Tibial artery (tissue), 4 donors: ENCODE measurements at regions of chr9 and their contacts with region 1.

Region 1: DNA sequence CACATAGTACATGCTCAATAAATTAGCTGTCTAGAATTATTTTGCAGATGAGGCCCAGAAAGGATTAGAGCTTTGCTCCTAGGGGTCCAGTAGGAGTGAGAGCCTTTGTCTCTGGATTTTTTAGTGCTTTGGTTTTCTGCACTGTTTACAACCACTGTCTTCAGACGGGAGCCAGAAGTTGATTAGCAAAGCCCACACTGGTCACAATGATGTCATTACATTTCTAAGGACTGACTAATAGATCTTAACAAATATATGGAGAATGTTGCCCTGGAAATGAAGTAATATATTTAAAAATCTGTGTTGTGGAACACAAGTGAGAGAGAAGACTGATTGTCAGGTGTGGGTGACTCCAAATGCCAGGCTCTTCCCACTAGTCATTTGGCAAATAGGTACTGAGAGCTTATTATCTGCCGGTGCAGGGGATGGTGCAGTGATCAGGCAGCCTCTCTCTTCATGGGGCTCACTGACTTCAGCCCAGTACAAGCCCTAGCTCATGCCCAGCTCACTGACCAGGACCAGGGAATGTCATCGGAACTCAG is 76.2 kb downstream of the COL15A1 start:
- DNase-seq: no peak
- H3K4me3 ChIP-seq: no peak overlapping the region
- H3K27ac ChIP-seq: peak overlapping the region; percentile 73 to 79
- H3K4me1 ChIP-seq: peaks cover 0 to 32% (median 21%) of the 10 kb centered on the region in 4 donors
- H3K27me3 ChIP-seq: no peaks in the 10 kb centered on the region
- CTCF ChIP-seq: no peak

Region 2: GRCh38 chr9:99104459-99105151 is 84.7 kb after region 1 on chr9 and contains the start of gene TGFBR1:
- intact Hi-C with region 1: loop called (anchors 5 kb)
- DNase-seq: peak; percentile 92 to 97
- H3K4me3 ChIP-seq: peak within 1 kb of the TSS; percentile 89 to 96
- H3K27ac ChIP-seq: peak within 1 kb of the TSS; percentile 97 to 98
- H3K4me1 ChIP-seq: peaks cover 0 to 59% (median 34%) of the 10 kb centered on the region in 4 donors
- H3K27me3 ChIP-seq: no peaks in the 10 kb centered on the region
- CTCF ChIP-seq: peak in 1 of 2 experiments; percentile 6